ENCODE measurements at regions of chr16 and their contacts with region 1.

Region 1: DNA sequence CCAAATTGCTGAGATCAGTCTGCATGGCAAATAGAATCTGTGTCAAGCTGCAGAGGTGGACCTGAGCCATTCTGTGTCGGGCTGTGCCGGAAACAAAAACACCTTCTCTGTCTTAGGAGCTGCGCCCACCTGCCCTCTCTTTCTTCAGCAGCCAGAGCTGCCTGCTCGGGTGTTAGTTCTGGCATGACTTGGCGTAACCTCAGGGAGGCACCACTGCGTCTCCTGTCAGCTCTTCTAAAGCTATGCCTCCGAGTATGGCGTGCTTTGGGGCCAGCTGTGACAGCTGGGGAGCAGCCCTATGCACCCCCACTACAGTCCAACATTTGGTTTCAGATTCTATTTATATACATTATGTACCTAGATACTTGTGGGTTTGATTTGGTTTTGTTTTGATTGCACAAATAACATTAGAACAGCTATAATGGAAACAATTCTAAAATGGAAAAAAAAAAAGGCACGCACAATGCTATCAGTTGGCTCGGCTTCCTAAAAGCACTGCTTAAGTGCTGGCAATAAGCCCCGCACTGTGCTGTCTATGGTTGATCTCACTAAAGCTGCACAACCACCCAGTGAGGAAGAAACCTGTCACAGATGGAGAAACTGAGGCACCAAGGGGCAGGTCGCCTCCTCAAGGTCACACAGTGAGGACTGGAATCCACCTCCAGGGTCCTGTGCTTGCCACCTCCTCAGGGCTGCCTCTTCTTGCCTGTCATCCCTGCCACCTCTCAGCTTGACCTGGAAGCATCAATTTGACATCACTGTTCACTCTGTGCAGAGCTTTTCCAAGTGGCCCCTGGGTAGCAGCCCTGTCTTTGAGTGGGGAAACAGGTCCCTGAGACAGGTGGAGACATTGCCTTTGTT is 18.7 kb upstream of the ADGRG1 start:
- DNase-seq: peak; percentile 95
- ATAC-seq: peak; percentile 93
- H3K4me3 Mint-ChIP-seq: peak overlapping the region; percentile 49
- H3K27ac Mint-ChIP-seq: peak overlapping the region; percentile 93
- H3K4me1 Mint-ChIP-seq: peaks cover 68% of the 10 kb centered on the region
- H3K27me3 Mint-ChIP-seq: no peaks in the 10 kb centered on the region
- CTCF ChIP-seq: no peak

Region 2: DNA sequence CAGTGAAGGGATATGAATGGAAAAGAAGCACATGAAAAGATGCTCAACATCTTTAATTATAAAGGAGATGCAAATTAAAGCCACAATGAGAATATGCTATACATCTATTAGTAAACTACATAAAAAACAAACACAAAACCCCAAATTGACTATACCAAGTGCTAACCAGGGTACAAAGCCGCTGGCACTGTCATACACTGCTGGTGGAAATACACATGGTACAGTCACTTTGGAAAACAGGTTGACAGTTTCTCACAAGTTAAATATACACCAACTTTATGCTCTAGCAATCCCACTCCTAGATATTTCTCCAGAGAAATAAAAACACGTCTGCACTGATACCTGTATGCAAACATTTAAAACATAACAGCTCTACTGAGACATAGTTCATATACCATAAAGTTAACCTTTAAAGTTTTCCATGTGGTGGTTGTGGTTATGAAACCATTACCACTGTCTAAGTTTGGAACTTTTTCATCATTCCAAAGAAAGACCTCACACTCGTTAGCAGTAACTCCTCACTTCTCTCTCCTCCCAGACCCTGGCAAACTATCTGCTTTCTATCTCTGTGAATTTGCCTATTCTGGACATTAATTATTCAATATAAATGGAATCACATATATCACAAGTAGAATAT is 24.6 kb before region 1 on chr16:
- CTCF ChIA-PET with region 1: interaction called, 72 read pairs
- POLR2A ChIA-PET with region 1: interaction called, 68 read pairs
- intact Hi-C with region 1: no loop called
- DNase-seq: no peak
- ATAC-seq: peak; percentile 31
- H3K4me3 Mint-ChIP-seq: no peak overlapping the region
- H3K27ac Mint-ChIP-seq: peak overlapping the region; percentile 58
- H3K4me1 Mint-ChIP-seq: peaks cover 32% of the 10 kb centered on the region
- H3K27me3 Mint-ChIP-seq: no peaks in the 10 kb centered on the region
- CTCF ChIP-seq: no peak

Region 3: GRCh38 chr16:57591086-57591869 is 18.5 kb before region 1 on chr16:
- CTCF ChIA-PET with region 1: interaction called, 72 read pairs
- POLR2A ChIA-PET with region 1: interaction called, 68 read pairs
- intact Hi-C with region 1: no loop called
- DNase-seq: peak; percentile 94
- ATAC-seq: peak; percentile 81
- H3K4me3 Mint-ChIP-seq: peak overlapping the region; percentile 77
- H3K27ac Mint-ChIP-seq: peak overlapping the region; percentile 98
- H3K4me1 Mint-ChIP-seq: peaks cover 49% of the 10 kb centered on the region
- H3K27me3 Mint-ChIP-seq: no peaks in the 10 kb centered on the region
- CTCF ChIP-seq: peak; percentile 94

Region 4: GRCh38 chr16:57639172-57639887 is 29.6 kb after region 1 on chr16:
- CTCF ChIA-PET with region 1: interaction called, 24 read pairs
- POLR2A ChIA-PET with region 1: interaction called, 6 read pairs
- intact Hi-C with region 1: no loop called
- DNase-seq: peak; percentile 42
- ATAC-seq: peak; percentile 40
- H3K4me3 Mint-ChIP-seq: no peak overlapping the region
- H3K27ac Mint-ChIP-seq: no peak overlapping the region
- H3K4me1 Mint-ChIP-seq: no peaks in the 10 kb centered on the region
- H3K27me3 Mint-ChIP-seq: no peaks in the 10 kb centered on the region
- CTCF ChIP-seq: no peak

Region 5: DNA sequence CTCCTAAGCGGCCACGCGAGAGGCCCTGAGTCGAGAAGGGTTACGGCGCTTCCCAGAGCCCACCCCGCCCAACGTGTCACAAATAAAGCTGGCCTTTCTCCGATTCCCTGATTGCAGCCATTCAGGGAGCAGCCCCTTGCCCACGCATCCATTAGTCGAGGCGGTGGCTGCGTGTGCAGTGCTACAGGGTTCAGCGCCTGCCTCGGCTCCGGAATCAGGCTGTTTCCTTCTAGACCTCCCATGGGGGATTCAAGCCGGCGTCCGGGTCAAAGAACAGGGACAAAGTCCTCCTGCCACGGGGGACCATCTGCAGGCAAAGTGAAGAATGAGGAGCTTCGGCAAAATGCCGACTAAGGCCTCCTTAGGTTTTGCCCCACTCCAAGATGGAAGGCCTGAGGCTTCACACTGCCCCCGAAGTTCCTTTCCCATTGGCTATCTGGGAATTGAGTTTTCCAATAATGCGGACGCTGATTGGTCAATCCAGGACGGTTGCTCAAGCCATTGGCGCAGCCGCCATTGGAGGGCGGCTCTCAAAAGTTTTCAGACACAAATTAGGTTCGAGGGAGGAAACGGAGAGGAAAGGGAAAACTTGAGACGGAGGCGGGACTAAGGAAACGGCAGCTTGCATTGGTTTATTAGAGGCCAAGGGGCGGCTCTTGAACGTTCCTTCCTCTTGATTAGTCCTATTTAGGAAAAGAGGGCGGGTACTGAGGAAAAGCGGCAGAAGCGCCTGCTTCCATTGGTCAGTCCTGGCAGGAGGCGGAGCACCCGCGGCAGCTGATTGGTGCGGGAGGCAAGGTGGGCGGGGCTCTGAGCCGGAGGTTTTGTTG is 125.4 kb after region 1 on chr16:
- CTCF ChIA-PET with region 1: interaction called, 13 read pairs
- POLR2A ChIA-PET with region 1: interaction called, 3 read pairs
- intact Hi-C with region 1: loop called (anchors 10 kb)
- DNase-seq: peak; percentile 99
- ATAC-seq: peak; percentile 93
- H3K4me3 Mint-ChIP-seq: peak overlapping the region; percentile 99
- H3K27ac Mint-ChIP-seq: peak overlapping the region; percentile 98
- H3K4me1 Mint-ChIP-seq: peaks cover 18% of the 10 kb centered on the region
- H3K27me3 Mint-ChIP-seq: no peaks in the 10 kb centered on the region
- CTCF ChIP-seq: no peak